ENCODE measurements at regions of chr3 and their contacts with region 1.

Region 1: DNA sequence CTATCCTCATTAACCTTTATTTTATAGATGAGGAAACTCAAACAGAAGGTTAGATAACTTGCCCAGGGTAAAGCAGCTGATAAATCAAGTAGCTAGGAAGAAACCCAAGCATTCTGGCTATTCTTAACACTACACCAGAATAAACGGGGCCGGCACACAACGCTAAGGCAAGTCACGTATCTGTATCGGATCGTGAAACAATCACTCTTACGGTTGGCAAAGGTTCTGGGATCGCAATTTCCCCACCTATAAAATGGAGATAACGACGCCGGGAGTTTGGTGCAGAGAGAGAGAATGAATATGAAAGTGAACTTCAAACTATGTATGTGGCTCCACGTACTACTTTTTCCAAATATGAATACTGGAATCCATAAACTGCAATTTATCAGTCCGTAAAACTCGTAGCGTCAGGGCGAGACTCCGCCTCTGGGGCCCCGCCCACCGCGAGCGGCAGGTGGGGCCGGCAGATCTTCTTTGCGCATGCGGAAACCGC is 252 bp upstream of the ARMC8 start:
- DNase-seq: peak; percentile 85 to 87
- H3K4me3 ChIP-seq: peak overlapping the region; percentile 65
- H3K4me3 Mint-ChIP-seq: peak overlapping the region; percentile 95
- H3K27ac Mint-ChIP-seq: peak overlapping the region; percentile 98
- H3K4me1 ChIP-seq: peaks cover 15% of the 10 kb centered on the region; the same call in 1 of the 2 replicates
- H3K4me1 Mint-ChIP-seq: peaks cover 15% of the 10 kb centered on the region
- H3K27me3 ChIP-seq: no peaks in the 10 kb centered on the region
- H3K27me3 Mint-ChIP-seq: peaks cover 4% of the 10 kb centered on the region
- CTCF ChIP-seq: no peak

Region 2: GRCh38 chr3:138174421-138175122 is 12.3 kb before region 1 on chr3 and contains the start of gene DBR1:
- CTCF ChIA-PET with region 1: interaction called, 4 read pairs
- POLR2A ChIA-PET with region 1: interaction called, 12 read pairs
- intact Hi-C with region 1: no loop called
- DNase-seq: peak; percentile 88 to 90
- H3K4me3 ChIP-seq: peak within 1 kb of the TSS; percentile 87
- H3K4me3 Mint-ChIP-seq: peak within 1 kb of the TSS; percentile 82
- H3K27ac Mint-ChIP-seq: peak within 1 kb of the TSS; percentile 97
- H3K4me1 ChIP-seq: no peaks in the 10 kb centered on the region
- H3K4me1 Mint-ChIP-seq: no peaks in the 10 kb centered on the region
- H3K27me3 ChIP-seq: no peaks in the 10 kb centered on the region
- H3K27me3 Mint-ChIP-seq: peaks cover 5% of the 10 kb centered on the region
- CTCF ChIP-seq: no peak
- total RNA-seq, gene DBR1: 14.8 and 16.9 TPM in 2 replicates

Region 3: DNA sequence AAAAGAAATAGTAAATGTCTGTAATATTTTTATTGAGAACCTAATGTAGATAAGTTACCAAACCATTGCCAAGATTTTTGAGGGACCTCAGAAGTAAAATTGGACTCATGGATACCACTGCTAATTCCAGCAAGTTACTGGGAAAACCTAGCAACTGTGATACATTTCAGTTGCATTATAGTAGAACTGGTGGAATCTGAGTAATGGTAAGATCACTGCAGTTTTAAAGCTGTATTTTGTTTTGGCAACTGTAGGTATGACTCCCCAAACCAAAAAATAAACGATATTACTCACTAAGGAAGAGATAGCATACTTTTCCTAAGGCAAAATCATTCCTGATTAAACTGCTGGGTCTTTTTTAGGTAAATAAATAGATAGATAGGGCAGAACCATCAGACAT is 54.2 kb after region 1 on chr3:
- CTCF ChIA-PET with region 1: no interaction called
- POLR2A ChIA-PET with region 1: no interaction called
- intact Hi-C with region 1: loop called (anchors 5 kb)
- DNase-seq: no peak
- H3K4me3 ChIP-seq: no peak overlapping the region
- H3K4me3 Mint-ChIP-seq: no peak overlapping the region
- H3K27ac Mint-ChIP-seq: no peak overlapping the region
- H3K4me1 ChIP-seq: no peaks in the 10 kb centered on the region
- H3K4me1 Mint-ChIP-seq: no peaks in the 10 kb centered on the region
- H3K27me3 ChIP-seq: no peaks in the 10 kb centered on the region
- H3K27me3 Mint-ChIP-seq: no peaks in the 10 kb centered on the region
- CTCF ChIP-seq: no peak